ENCODE measurements at regions of chr4 and their contacts with region 1.

Region 1: DNA sequence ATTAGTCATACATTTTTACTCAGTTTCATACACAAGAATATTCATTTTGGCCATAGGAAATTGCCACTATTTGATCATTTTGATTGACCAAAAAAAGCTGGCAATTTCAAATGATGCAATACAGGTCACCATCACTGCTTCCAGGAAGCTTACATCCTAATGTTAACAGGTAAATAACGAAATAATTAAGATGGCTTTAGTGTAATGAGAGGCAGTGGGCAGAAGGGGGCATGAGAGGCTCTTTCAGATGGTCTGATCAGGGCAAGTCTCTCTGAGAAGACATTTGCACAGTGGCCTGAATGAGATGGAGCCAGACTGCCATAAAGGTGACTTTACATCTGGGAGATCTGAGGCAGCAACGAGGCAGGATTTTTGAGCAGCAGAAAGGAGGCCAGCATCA is 170.7 kb downstream of the SLIT2 start:
- DNase-seq: no peak
- ATAC-seq: no peak
- H3K4me3 ChIP-seq: no peak overlapping the region
- H3K27ac ChIP-seq: no peak overlapping the region
- H3K4me1 ChIP-seq: no peaks in the 10 kb centered on the region
- H3K27me3 ChIP-seq: no peaks in the 10 kb centered on the region
- CTCF ChIP-seq: peak in 2 of 5 experiments; percentile 15 to 16
- POLR2A ChIP-seq: no peak

Region 2: DNA sequence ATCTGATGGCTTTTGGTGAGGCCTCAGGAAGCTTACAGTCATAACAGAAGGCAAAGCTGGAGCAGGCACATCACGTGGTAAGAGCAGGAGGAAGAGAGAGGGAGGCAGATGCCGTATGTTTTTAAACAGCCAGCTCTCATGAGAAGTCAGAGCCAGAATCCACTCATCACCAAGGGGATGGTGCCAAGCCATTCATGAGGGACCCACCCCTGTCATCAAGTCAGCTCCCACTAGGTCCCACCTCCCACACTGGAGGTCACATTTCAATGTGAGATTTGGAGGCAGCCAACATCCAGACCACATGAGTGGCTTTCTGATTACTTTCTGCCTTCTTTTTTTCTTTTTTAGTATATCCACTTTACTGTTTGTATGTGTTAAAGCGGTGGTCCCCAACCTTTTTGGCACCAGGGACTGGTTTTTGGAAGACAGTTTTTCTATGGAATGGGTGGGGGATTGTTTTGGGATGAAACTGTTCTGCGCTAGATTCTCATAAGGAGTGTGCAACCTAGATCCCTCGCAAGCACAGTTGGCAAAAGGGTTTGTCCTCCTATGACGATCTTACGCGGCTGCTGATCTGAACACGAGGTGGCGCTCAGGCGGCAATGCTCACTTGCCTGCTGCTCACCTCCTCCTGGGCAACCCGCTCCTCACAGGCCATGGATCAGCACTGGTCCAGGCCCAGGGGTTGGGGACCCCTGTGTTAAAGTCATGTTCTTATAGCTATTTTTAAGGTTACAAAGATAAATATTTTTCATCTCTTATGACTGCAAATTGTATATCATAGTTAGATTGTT is 109.0 kb before region 1 on chr4:
- in situ Hi-C with region 1: no loop called
- intact Hi-C with region 1: loop called (anchors 10 kb)
- DNase-seq: no peak
- ATAC-seq: no peak
- H3K4me3 ChIP-seq: no peak overlapping the region
- H3K27ac ChIP-seq: no peak overlapping the region
- H3K4me1 ChIP-seq: no peaks in the 10 kb centered on the region
- H3K27me3 ChIP-seq: no peaks in the 10 kb centered on the region
- CTCF ChIP-seq: no peak
- POLR2A ChIP-seq: no peak

Region 3: GRCh38 chr4:20544645-20545044 is 122.2 kb after region 1 on chr4:
- in situ Hi-C with region 1: no loop called
- intact Hi-C with region 1: no loop called
- DNase-seq: no peak
- ATAC-seq: no peak
- H3K4me3 ChIP-seq: no peak overlapping the region
- H3K27ac ChIP-seq: no peak overlapping the region
- H3K4me1 ChIP-seq: no peaks in the 10 kb centered on the region
- H3K27me3 ChIP-seq: no peaks in the 10 kb centered on the region
- CTCF ChIP-seq: peak in 1 of 5 experiments; percentile 21
- POLR2A ChIP-seq: no peak

Region 4: DNA sequence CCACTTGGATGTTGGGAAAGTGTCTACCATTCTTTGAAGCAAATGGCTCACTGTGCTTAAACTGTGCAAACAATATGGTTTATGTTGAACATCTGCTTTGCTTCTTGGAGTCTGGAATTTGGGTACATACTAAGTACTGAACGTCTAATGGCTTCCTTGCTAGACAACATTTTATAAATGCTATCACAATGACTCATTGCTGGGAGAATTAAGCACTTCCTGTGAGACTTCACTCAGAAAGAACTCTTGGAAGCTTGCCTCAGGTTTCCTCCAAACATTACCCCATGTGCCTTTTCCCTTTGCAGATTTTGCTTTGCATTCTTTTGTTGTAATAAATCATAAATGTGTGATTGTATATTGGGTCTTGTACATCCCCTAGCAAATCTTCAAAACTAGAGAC is 417.6 kb after region 1 on chr4:
- in situ Hi-C with region 1: no loop called
- intact Hi-C with region 1: no loop called
- DNase-seq: no peak
- ATAC-seq: no peak
- H3K4me3 ChIP-seq: no peak overlapping the region
- H3K27ac ChIP-seq: no peak overlapping the region
- H3K4me1 ChIP-seq: no peaks in the 10 kb centered on the region
- H3K27me3 ChIP-seq: no peaks in the 10 kb centered on the region
- CTCF ChIP-seq: no peak
- POLR2A ChIP-seq: no peak

Region 5: DNA sequence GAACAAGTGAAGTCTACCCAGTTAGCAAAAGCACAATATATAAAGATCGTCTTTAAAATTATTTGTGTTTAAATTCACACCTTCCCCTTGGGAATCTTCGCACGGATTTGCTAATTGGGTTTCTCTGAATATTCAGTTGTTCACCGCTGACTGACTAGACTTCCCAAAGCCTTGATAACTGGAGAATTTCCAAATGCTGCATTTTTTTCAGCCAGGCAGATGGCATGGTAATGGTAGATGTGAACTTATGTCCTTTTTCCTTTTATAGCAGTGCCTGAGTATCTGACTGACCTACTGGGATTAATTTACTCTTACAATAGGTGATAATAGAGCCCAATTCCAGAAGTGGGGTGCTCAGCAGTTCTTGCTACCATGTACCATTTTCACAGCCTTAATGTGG is 825.9 kb after region 1 on chr4:
- in situ Hi-C with region 1: no loop called
- intact Hi-C with region 1: no loop called
- DNase-seq: no peak
- ATAC-seq: no peak
- H3K4me3 ChIP-seq: no peak overlapping the region
- H3K27ac ChIP-seq: no peak overlapping the region
- H3K4me1 ChIP-seq: no peaks in the 10 kb centered on the region
- H3K27me3 ChIP-seq: no peaks in the 10 kb centered on the region
- CTCF ChIP-seq: no peak
- POLR2A ChIP-seq: no peak